ENCODE measurements at regions of chr13 and their contacts with region 1.

Region 1: GRCh38 chr13:25574437-25575411 is 202.9 kb downstream of the ATP8A2 start:
- DNase-seq: peak; percentile 91
- H3K4me3 Mint-ChIP-seq: no peak overlapping the region
- H3K27ac Mint-ChIP-seq: no peak overlapping the region
- H3K4me1 Mint-ChIP-seq: peaks cover 6% of the 10 kb centered on the region
- H3K27me3 Mint-ChIP-seq: peaks cover 11% of the 10 kb centered on the region
- CTCF ChIP-seq: peak; percentile 93

Region 2: GRCh38 chr13:25232937-25233515 is 341.7 kb before region 1 on chr13:
- CTCF ChIA-PET with region 1: interaction called, 5 read pairs
- POLR2A ChIA-PET with region 1: no interaction called
- intact Hi-C with region 1: loop called (anchors 5 kb)
- DNase-seq: peak; percentile 45
- H3K4me3 Mint-ChIP-seq: no peak overlapping the region
- H3K27ac Mint-ChIP-seq: no peak overlapping the region
- H3K4me1 Mint-ChIP-seq: no peaks in the 10 kb centered on the region
- H3K27me3 Mint-ChIP-seq: peaks cover 16% of the 10 kb centered on the region
- CTCF ChIP-seq: peak; percentile 32

Region 3: GRCh38 chr13:25827831-25828465 is 253.2 kb after region 1 on chr13:
- CTCF ChIA-PET with region 1: interaction called, 7 read pairs
- POLR2A ChIA-PET with region 1: no interaction called
- intact Hi-C with region 1: loop called (anchors 1 kb)
- DNase-seq: no peak
- H3K4me3 Mint-ChIP-seq: no peak overlapping the region
- H3K27ac Mint-ChIP-seq: no peak overlapping the region
- H3K4me1 Mint-ChIP-seq: no peaks in the 10 kb centered on the region
- H3K27me3 Mint-ChIP-seq: no peaks in the 10 kb centered on the region
- CTCF ChIP-seq: no peak

Region 4: GRCh38 chr13:26062844-26063444 is 488.2 kb after region 1 on chr13:
- CTCF ChIA-PET with region 1: interaction called, 46 read pairs
- POLR2A ChIA-PET with region 1: interaction called, 4 read pairs
- intact Hi-C with region 1: loop called (anchors 1 kb)
- DNase-seq: peak; percentile 71
- H3K4me3 Mint-ChIP-seq: no peak overlapping the region
- H3K27ac Mint-ChIP-seq: no peak overlapping the region
- H3K4me1 Mint-ChIP-seq: peaks cover 13% of the 10 kb centered on the region
- H3K27me3 Mint-ChIP-seq: no peaks in the 10 kb centered on the region
- CTCF ChIP-seq: peak; percentile 68

Region 5: DNA sequence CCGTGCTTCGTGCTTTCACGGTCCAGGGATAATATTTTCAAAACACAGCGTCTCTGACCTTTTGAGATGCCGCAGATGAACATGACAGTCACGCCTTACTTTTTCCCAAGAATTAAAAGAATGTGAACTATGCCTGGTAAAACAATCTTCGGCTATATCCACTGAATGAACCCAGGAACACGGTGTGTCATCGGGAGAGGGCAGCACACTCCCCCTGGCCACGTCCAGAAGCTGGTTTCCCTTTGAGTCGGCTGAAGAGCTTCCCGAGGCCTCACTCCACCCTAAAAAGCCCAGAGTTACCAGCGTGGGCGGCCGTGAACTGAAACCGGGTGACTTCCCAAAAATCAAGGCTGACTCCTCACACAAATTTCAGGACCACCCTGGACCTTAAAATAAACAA is 500.0 kb after region 1 on chr13:
- CTCF ChIA-PET with region 1: interaction called, 21 read pairs
- POLR2A ChIA-PET with region 1: interaction called, 3 read pairs
- intact Hi-C with region 1: loop called (anchors 1 kb)
- DNase-seq: peak; percentile 46
- H3K4me3 Mint-ChIP-seq: peak overlapping the region; percentile 40
- H3K27ac Mint-ChIP-seq: peak overlapping the region; percentile 51
- H3K4me1 Mint-ChIP-seq: no peaks in the 10 kb centered on the region
- H3K27me3 Mint-ChIP-seq: no peaks in the 10 kb centered on the region
- CTCF ChIP-seq: peak; percentile 8

Measured in MCF 10A (cell line).